Heart left ventricle (tissue), 16 donors: ENCODE measurements at regions of chr4 and their contacts with region 1.

Region 1: GRCh38 chr4:112231779-112232713 is at the start of gene AP1AR:
- DNase-seq: peak; percentile 84 to 92 (median 86)
- ATAC-seq: peak; percentile 66 to 86 (median 80)
- H3K4me3 ChIP-seq: peak within 1 kb of the TSS; percentile 78 to 99 (median 90)
- H3K27ac ChIP-seq: peak within 1 kb of the TSS; percentile 74 to 99 (median 94)
- H3K4me1 ChIP-seq: peaks cover 0 to 36% (median 21%) of the 10 kb centered on the region in 12 donors
- H3K27me3 ChIP-seq: no peaks in the 10 kb centered on the region
- CTCF ChIP-seq: peak in 10 of 12 donors; percentile 7 to 53 (median 29)
- POLR2A ChIP-seq: peak in 1 of 2 donors; percentile 86
- total RNA-seq, gene AP1AR: 6.8 to 17.3 (median 9.2) TPM

Region 2: DNA sequence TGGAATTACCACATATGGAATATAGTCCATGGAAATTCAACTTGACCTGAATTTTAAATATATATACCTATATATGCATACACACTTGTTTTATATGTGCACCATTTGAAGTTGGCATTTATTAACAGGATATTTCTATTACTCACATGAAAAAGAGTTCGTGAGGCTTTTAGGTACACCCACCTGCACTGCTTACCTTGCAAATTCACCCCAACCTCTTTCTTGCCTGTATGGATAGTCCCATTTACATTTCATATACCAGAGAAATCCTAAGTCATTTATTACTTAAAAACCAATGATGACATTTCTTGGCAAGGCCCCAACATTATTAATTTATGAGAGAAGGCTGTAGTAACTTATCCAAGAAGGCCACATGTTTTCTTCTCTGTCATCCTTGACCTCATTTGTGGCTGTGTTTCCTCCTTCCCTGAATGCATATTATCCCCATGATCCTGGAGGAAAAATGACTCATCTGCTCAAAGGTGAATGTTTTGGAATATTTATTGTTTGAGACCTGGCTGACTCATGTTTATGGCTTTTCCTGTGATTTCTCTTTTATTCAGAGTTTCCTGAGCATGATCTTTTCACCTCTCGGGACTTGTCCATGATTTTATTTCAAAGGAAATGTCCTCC is 149.0 kb before region 1 on chr4:
- intact Hi-C with region 1: loop called in 1 of 10 experiments (anchors 5 kb)
- DNase-seq: no peak
- ATAC-seq: peak in 3 of 4 donors; percentile 24 to 93 (median 56)
- H3K4me3 ChIP-seq: no peak overlapping the region
- H3K27ac ChIP-seq: peak overlapping the region in 10 of 12 donors; percentile 27 to 85 (median 58)
- H3K4me1 ChIP-seq: peaks cover 0 to 27% (median 15%) of the 10 kb centered on the region in 12 donors
- H3K27me3 ChIP-seq: peaks cover 0 to 3% (median 0%) of the 10 kb centered on the region in 9 donors
- CTCF ChIP-seq: no peak
- POLR2A ChIP-seq: no peak

Region 3: GRCh38 chr4:112099701-112100297 is 132.2 kb before region 1 on chr4:
- intact Hi-C with region 1: loop called (anchors 1 to 5 kb)
- DNase-seq: no peak
- ATAC-seq: peak; percentile 58 to 85 (median 70)
- H3K4me3 ChIP-seq: no peak overlapping the region
- H3K27ac ChIP-seq: no peak overlapping the region
- H3K4me1 ChIP-seq: peaks cover 0 to 24% (median 4%) of the 10 kb centered on the region in 12 donors
- H3K27me3 ChIP-seq: no peaks in the 10 kb centered on the region
- CTCF ChIP-seq: peak; percentile 54 to 84 (median 74)
- POLR2A ChIP-seq: no peak

Region 4: GRCh38 chr4:112109186-112110058 is 122.6 kb before region 1 on chr4:
- intact Hi-C with region 1: loop called in 1 of 10 experiments (anchors 2 kb)
- DNase-seq: no peak
- ATAC-seq: peak; percentile 37 to 85 (median 60)
- H3K4me3 ChIP-seq: peak overlapping the region in 1 of 12 donors; percentile 5
- H3K27ac ChIP-seq: peak overlapping the region in 10 of 12 donors; percentile 2 to 74 (median 54)
- H3K4me1 ChIP-seq: peaks cover 0 to 27% (median 2%) of the 10 kb centered on the region in 12 donors
- H3K27me3 ChIP-seq: no peaks in the 10 kb centered on the region
- CTCF ChIP-seq: no peak
- POLR2A ChIP-seq: no peak

Region 5: GRCh38 chr4:112145326-112145819 is 86.7 kb before region 1 on chr4 and contains the start of gene FAM241A:
- intact Hi-C with region 1: loop called in 9 of 10 experiments (anchors 1 to 5 kb)
- DNase-seq: peak; percentile 90 to 96 (median 92)
- ATAC-seq: peak; percentile 98 to 99 (median 98)
- H3K4me3 ChIP-seq: peak within 1 kb of the TSS; percentile 74 to 94 (median 84)
- H3K27ac ChIP-seq: peak within 1 kb of the TSS; percentile 79 to 96 (median 90)
- H3K4me1 ChIP-seq: peaks cover 5 to 65% (median 43%) of the 10 kb centered on the region in 12 donors
- H3K27me3 ChIP-seq: no peaks in the 10 kb centered on the region
- CTCF ChIP-seq: peak in 1 of 12 donors; percentile 4
- POLR2A ChIP-seq: peak; percentile 53 to 98
- total RNA-seq, gene FAM241A: 5.4 to 10.3 (median 8.5) TPM

Region 6: GRCh38 chr4:112284662-112285411 is 52.8 kb after region 1 on chr4:
- intact Hi-C with region 1: loop called in 1 of 10 experiments (anchors 5 kb)
- DNase-seq: peak in 2 of 5 donors; percentile 35 to 59
- ATAC-seq: peak; percentile 13 to 60 (median 50)
- H3K4me3 ChIP-seq: peak overlapping the region; percentile 32 to 96 (median 82)
- H3K27ac ChIP-seq: peak overlapping the region; percentile 33 to 85 (median 70)
- H3K4me1 ChIP-seq: peaks cover 0 to 70% (median 4%) of the 10 kb centered on the region in 12 donors
- H3K27me3 ChIP-seq: no peaks in the 10 kb centered on the region
- CTCF ChIP-seq: no peak
- POLR2A ChIP-seq: no peak

Region 7: DNA sequence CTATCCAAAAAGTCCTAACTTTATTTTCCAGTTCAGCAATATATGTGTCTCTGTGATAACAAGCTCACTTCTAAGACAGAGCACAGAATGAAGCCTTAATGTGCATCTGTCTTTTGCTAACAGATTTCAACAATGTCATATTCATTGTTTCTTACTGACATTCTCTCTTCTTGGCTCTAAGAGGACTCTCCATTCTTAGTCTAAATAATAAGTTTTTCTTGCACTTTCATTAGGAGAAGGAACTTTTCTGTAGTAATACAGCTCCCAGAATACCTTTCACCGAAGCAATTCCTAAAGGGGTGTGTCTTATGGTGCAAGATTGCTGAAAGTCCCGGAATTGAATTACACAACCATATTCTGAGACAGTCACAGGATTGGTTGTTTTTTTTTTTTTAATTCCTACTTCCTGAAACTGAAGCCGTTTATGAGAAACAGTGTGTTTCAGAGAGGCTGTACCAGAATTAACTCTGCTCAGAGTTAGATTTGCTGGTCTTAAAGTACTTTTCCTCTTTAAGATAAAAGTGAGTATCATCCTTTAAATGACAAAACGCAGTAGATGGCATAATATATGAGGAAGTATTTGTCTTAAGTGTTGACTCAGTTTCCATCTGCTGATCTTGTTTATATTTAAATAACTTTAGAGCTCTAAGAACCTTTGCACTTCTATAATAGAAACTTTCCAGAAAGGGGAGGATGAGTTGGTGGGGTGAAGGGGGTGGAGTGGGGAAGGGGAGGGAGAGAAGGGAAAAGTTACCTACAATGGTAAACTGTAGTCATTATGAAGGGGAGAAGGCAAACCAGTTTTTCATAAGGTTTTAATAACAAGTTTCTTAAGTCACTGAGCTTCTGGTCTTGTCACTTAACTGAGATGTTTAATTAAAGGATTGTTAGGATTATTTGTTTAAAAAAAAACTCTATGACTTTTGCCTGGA is 65.2 kb after region 1 on chr4 and contains the start of gene ALPK1:
- intact Hi-C with region 1: loop called in 1 of 10 experiments (anchors 5 kb)
- DNase-seq: peak in 1 of 5 donors; percentile 20
- ATAC-seq: peak; percentile 91 to 99 (median 97)
- H3K4me3 ChIP-seq: peak within 1 kb of the TSS in 11 of 12 donors; percentile 20 to 65 (median 49)
- H3K27ac ChIP-seq: peak within 1 kb of the TSS in 11 of 12 donors; percentile 20 to 93 (median 61)
- H3K4me1 ChIP-seq: peaks cover 0 to 40% (median 3%) of the 10 kb centered on the region in 12 donors
- H3K27me3 ChIP-seq: no peaks in the 10 kb centered on the region
- CTCF ChIP-seq: no peak
- POLR2A ChIP-seq: peak in 1 of 2 donors; percentile 43
- total RNA-seq, gene ALPK1: 2.2 to 21.7 (median 3.4) TPM

Region 8: GRCh38 chr4:112589206-112589605 is 357.2 kb after region 1 on chr4:
- intact Hi-C with region 1: no loop called
- DNase-seq: no peak
- ATAC-seq: no peak
- H3K4me3 ChIP-seq: no peak overlapping the region
- H3K27ac ChIP-seq: no peak overlapping the region
- H3K4me1 ChIP-seq: no peaks in the 10 kb centered on the region
- H3K27me3 ChIP-seq: no peaks in the 10 kb centered on the region
- CTCF ChIP-seq: no peak
- POLR2A ChIP-seq: no peak